Naive thymus-derived CD4-positive, alpha-beta T cell (primary cell): ENCODE measurements at regions of chr3 and their contacts with region 1.

Region 1: DNA sequence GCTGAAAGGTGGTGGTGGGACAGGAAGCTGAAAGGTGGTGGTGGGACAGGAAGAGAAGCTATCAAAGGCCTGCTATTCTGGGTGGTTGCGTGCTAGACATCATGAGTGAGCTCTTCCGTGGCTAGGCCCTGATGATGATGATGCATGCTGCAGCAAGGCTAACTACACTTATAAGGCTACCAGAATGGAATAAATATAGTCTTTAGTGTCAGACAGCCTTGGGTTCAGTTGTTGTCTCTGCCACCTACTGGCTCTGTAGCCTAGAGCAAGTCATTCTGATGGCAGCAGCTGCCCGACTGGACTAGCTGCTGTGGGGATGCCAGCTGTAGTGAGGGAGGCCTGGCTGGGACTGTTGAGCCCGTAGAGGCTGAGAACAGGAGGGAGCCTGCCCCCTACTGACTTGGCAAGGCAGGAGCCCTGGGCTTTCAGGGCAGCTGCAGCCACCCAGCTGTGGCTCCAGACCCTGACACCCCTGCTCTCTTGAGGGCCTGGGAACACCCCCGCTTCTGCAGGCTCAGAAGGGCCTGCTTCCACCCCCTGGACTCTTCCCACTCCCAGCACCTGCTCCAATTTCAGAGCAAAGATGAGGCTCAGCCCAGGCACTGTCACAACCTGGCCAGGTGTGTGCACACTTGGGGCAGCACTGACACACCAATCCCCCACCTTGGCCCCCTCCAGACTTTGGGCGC is 21.4 kb upstream of the ZBED2 start:
- DNase-seq: peak in 8 of 9 donors; percentile 40 to 71 (median 66)
- ATAC-seq: peak; percentile 92
- H3K4me3 ChIP-seq: no peak overlapping the region
- H3K4me3 Mint-ChIP-seq: peak overlapping the region; percentile 2 to 64 (median 39)
- H3K27ac ChIP-seq: peak overlapping the region; percentile 43
- H3K27ac Mint-ChIP-seq: peak overlapping the region; percentile 52 to 95 (median 78)
- H3K4me1 ChIP-seq: peaks cover 21 to 32% of the 10 kb centered on the region in 2 donors
- H3K4me1 Mint-ChIP-seq: peaks cover 30 to 71% (median 58%) of the 10 kb centered on the region in 7 donors
- H3K27me3 ChIP-seq: no peaks in the 10 kb centered on the region
- H3K27me3 Mint-ChIP-seq: no peaks in the 10 kb centered on the region

Region 2: GRCh38 chr3:111238885-111239284 is 377.7 kb before region 1 on chr3:
- CTCF ChIA-PET with region 1: no interaction called
- POLR2A ChIA-PET with region 1: no interaction called
- intact Hi-C with region 1: loop called in 1 of 2 experiments (anchors 2 kb)
- DNase-seq: peak in 6 of 9 donors; percentile 16 to 47 (median 34)
- ATAC-seq: peak; percentile 75
- H3K4me3 ChIP-seq: no peak overlapping the region
- H3K4me3 Mint-ChIP-seq: peak overlapping the region in 8 of 10 donors; percentile 0 to 76 (median 54)
- H3K27ac ChIP-seq: peak overlapping the region; percentile 4
- H3K27ac Mint-ChIP-seq: peak overlapping the region; percentile 0 to 90 (median 64)
- H3K4me1 ChIP-seq: peaks cover 6 to 15% of the 10 kb centered on the region in 2 donors
- H3K4me1 Mint-ChIP-seq: peaks cover 11 to 47% (median 35%) of the 10 kb centered on the region in 7 donors
- H3K27me3 ChIP-seq: no peaks in the 10 kb centered on the region
- H3K27me3 Mint-ChIP-seq: no peaks in the 10 kb centered on the region

Region 3: DNA sequence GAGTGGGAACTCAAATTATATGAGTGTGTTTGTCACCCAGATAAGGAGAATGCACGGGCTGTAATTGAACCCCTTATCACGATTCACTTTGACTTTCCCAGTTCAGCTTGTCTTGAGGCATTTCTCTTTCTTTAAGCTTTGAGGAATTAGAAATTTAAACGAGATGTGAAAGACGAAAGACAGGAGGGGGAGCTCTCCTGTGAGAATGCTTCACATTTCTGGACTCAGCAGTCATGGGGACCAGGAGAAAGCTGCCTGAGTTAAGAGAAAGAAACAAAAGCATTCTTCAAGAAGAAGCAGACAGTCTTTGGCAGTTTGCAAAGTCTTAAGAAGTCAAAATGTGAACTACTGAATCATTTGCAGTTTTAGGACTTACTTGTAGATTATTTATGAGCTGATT is 339.3 kb before region 1 on chr3:
- CTCF ChIA-PET with region 1: no interaction called
- POLR2A ChIA-PET with region 1: no interaction called
- intact Hi-C with region 1: loop called in 1 of 2 experiments (anchors 2 kb)
- DNase-seq: peak in 2 of 9 donors; percentile 4 to 23
- ATAC-seq: no peak
- H3K4me3 ChIP-seq: no peak overlapping the region
- H3K4me3 Mint-ChIP-seq: no peak overlapping the region
- H3K27ac ChIP-seq: no peak overlapping the region
- H3K27ac Mint-ChIP-seq: peak overlapping the region in 1 of 9 donors; percentile 59
- H3K4me1 ChIP-seq: no peaks in the 10 kb centered on the region
- H3K4me1 Mint-ChIP-seq: peaks cover 6 to 33% (median 24%) of the 10 kb centered on the region in 7 donors
- H3K27me3 ChIP-seq: no peaks in the 10 kb centered on the region
- H3K27me3 Mint-ChIP-seq: peaks cover 0 to 8% (median 4%) of the 10 kb centered on the region in 5 donors

Region 4: GRCh38 chr3:111392901-111393351 is 223.6 kb before region 1 on chr3:
- CTCF ChIA-PET with region 1: no interaction called
- POLR2A ChIA-PET with region 1: no interaction called
- intact Hi-C with region 1: loop called in 1 of 2 experiments (anchors 2 kb)
- DNase-seq: peak in 7 of 9 donors; percentile 40 to 78 (median 75)
- ATAC-seq: peak; percentile 99
- H3K4me3 ChIP-seq: no peak overlapping the region
- H3K4me3 Mint-ChIP-seq: peak overlapping the region in 9 of 10 donors; percentile 1 to 59 (median 22)
- H3K27ac ChIP-seq: peak overlapping the region; percentile 25
- H3K27ac Mint-ChIP-seq: peak overlapping the region in 8 of 9 donors; percentile 65 to 96 (median 88)
- H3K4me1 ChIP-seq: peaks cover 0 to 13% of the 10 kb centered on the region in 2 donors
- H3K4me1 Mint-ChIP-seq: peaks cover 10 to 29% (median 23%) of the 10 kb centered on the region in 7 donors
- H3K27me3 ChIP-seq: no peaks in the 10 kb centered on the region
- H3K27me3 Mint-ChIP-seq: no peaks in the 10 kb centered on the region

Region 5: DNA sequence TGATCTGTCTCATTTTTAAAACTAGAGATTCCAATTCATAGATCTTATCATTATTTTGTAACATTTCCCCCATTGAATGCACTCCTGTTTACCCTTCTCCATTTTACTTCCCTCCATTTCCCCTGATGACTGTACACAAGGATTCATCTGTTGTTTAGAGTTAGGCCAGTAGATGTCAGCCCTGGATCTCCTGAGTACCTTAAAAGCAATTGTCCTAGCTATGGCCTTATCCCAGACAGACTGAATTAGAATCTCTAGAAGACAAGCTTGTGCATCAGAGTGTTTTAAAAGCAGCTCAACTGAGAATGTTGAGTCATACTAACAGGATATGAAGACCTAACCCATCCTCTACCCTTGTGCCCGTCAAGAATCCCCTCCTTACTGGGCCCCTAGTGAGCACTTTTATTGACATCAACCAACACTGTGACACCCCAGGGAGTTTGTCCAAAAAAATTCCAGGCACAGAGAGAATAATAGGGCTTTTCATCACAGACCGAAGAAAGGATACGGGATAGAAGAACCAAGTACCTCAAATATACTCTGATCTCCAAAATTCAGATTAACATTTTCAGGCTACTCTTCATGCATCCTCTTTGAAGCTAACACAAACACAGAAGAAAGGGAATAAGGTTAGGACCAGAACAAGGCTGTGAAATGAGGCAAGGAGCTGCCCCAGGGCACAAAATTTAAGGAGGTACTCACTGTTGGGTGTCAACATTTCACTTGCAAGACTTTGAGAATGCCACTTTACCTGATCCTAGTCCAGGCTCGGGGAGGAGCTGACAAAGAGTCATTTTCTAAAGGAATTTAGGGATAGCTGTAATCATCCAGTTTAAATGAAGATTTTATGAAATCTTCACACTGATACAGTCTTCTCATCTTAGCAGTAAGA is 38.5 kb before region 1 on chr3:
- CTCF ChIA-PET with region 1: interaction called, 4 read pairs
- POLR2A ChIA-PET with region 1: no interaction called
- intact Hi-C with region 1: loop called (anchors 1 kb)
- DNase-seq: peak in 1 of 9 donors; percentile 7
- ATAC-seq: peak; percentile 71
- H3K4me3 ChIP-seq: no peak overlapping the region
- H3K4me3 Mint-ChIP-seq: peak overlapping the region in 1 of 10 donors; percentile 13
- H3K27ac ChIP-seq: no peak overlapping the region
- H3K27ac Mint-ChIP-seq: peak overlapping the region in 8 of 9 donors; percentile 27 to 83 (median 60)
- H3K4me1 ChIP-seq: no peaks in the 10 kb centered on the region
- H3K4me1 Mint-ChIP-seq: peaks cover 18 to 72% (median 61%) of the 10 kb centered on the region in 7 donors
- H3K27me3 ChIP-seq: no peaks in the 10 kb centered on the region
- H3K27me3 Mint-ChIP-seq: no peaks in the 10 kb centered on the region

Region 6: GRCh38 chr3:111604119-111604518 is 12.4 kb before region 1 on chr3:
- CTCF ChIA-PET with region 1: interaction called, 3 read pairs
- POLR2A ChIA-PET with region 1: no interaction called
- intact Hi-C with region 1: loop called in 1 of 2 experiments (anchors 2 kb)
- DNase-seq: no peak
- ATAC-seq: no peak
- H3K4me3 ChIP-seq: no peak overlapping the region
- H3K4me3 Mint-ChIP-seq: peak overlapping the region in 1 of 10 donors; percentile 53
- H3K27ac ChIP-seq: no peak overlapping the region
- H3K27ac Mint-ChIP-seq: peak overlapping the region in 3 of 9 donors; percentile 11 to 56 (median 21)
- H3K4me1 ChIP-seq: peaks cover 2 to 16% of the 10 kb centered on the region in 2 donors
- H3K4me1 Mint-ChIP-seq: peaks cover 10 to 77% (median 38%) of the 10 kb centered on the region in 7 donors
- H3K27me3 ChIP-seq: no peaks in the 10 kb centered on the region
- H3K27me3 Mint-ChIP-seq: no peaks in the 10 kb centered on the region

Region 7: GRCh38 chr3:111737706-111738086 is 121.1 kb after region 1 on chr3:
- CTCF ChIA-PET with region 1: no interaction called
- POLR2A ChIA-PET with region 1: no interaction called
- intact Hi-C with region 1: no loop called
- DNase-seq: no peak
- ATAC-seq: no peak
- H3K4me3 ChIP-seq: no peak overlapping the region
- H3K4me3 Mint-ChIP-seq: no peak overlapping the region
- H3K27ac ChIP-seq: no peak overlapping the region
- H3K27ac Mint-ChIP-seq: no peak overlapping the region
- H3K4me1 ChIP-seq: no peaks in the 10 kb centered on the region
- H3K4me1 Mint-ChIP-seq: peaks cover 0 to 23% (median 0%) of the 10 kb centered on the region in 7 donors
- H3K27me3 ChIP-seq: no peaks in the 10 kb centered on the region
- H3K27me3 Mint-ChIP-seq: no peaks in the 10 kb centered on the region

Region 8: GRCh38 chr3:113019182-113020137 is 1402.9 kb after region 1 on chr3:
- CTCF ChIA-PET with region 1: no interaction called
- POLR2A ChIA-PET with region 1: no interaction called
- intact Hi-C with region 1: no loop called
- DNase-seq: peak; percentile 69 to 89 (median 74)
- ATAC-seq: peak; percentile 92
- H3K4me3 ChIP-seq: peak overlapping the region; percentile 81
- H3K4me3 Mint-ChIP-seq: peak overlapping the region; percentile 87 to 97 (median 92)
- H3K27ac ChIP-seq: peak overlapping the region; percentile 96
- H3K27ac Mint-ChIP-seq: peak overlapping the region; percentile 87 to 96 (median 91)
- H3K4me1 ChIP-seq: peaks cover 19 to 21% of the 10 kb centered on the region in 2 donors
- H3K4me1 Mint-ChIP-seq: peaks cover 44 to 87% (median 71%) of the 10 kb centered on the region in 7 donors
- H3K27me3 ChIP-seq: no peaks in the 10 kb centered on the region
- H3K27me3 Mint-ChIP-seq: no peaks in the 10 kb centered on the region